ENCODE measurements at regions of chr6 and their contacts with region 1.

Region 1: DNA sequence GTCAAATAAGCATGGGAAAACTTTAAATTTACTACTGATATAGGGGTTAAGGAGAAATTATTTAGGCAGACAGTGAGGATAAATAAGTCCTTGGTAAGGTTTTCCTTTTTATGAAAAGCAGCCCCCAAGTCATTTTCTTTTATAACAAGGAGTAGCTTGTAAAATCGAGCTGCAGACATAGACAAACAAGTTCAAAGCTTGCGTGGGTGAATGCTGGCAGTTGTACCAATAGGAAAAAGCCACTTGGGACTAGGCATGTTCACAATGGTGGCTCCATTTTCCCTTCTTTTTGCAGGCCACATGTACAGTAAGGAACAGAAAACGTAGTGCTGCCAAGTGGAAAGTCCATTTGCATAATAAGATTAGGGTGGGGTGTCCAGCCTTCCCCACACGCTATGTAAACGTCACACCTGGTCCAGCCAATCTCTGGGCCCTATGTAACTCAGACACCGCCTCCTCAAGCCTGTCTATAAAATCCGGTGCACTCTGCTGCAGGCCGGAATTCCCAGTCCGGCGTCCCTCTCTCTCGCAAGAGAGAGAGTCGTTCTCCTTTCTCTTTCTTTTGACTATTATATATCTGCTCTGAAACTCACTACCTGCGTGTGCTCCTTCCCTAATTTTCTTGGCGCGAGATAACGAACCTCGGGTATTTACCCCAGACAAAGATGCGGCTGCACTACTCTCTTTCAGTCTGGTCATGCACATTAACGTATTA is 217.1 kb upstream of the MAN1A1 start:
- DNase-seq: no peak
- ATAC-seq: no peak
- H3K4me3 ChIP-seq: no peak overlapping the region
- H3K27ac ChIP-seq: no peak overlapping the region
- H3K4me1 ChIP-seq: no peaks in the 10 kb centered on the region
- H3K27me3 ChIP-seq: no peaks in the 10 kb centered on the region
- CTCF ChIP-seq: no peak
- POLR2A ChIP-seq: no peak

Region 2: GRCh38 chr6:119647309-119647708 is 80.6 kb after region 1 on chr6:
- in situ Hi-C with region 1: no loop called
- intact Hi-C with region 1: no loop called
- DNase-seq: no peak
- ATAC-seq: no peak
- H3K4me3 ChIP-seq: no peak overlapping the region
- H3K27ac ChIP-seq: no peak overlapping the region
- H3K4me1 ChIP-seq: no peaks in the 10 kb centered on the region
- H3K27me3 ChIP-seq: no peaks in the 10 kb centered on the region
- CTCF ChIP-seq: no peak
- POLR2A ChIP-seq: no peak

Region 3: GRCh38 chr6:119727504-119728217 is 161.0 kb after region 1 on chr6:
- in situ Hi-C with region 1: no loop called
- intact Hi-C with region 1: no loop called
- DNase-seq: no peak
- ATAC-seq: no peak
- H3K4me3 ChIP-seq: no peak overlapping the region
- H3K27ac ChIP-seq: no peak overlapping the region
- H3K4me1 ChIP-seq: no peaks in the 10 kb centered on the region
- H3K27me3 ChIP-seq: no peaks in the 10 kb centered on the region
- CTCF ChIP-seq: no peak
- POLR2A ChIP-seq: no peak

Region 4: GRCh38 chr6:120632975-120633374 is 1066.3 kb after region 1 on chr6:
- in situ Hi-C with region 1: no loop called
- intact Hi-C with region 1: loop called (anchors 10 kb)
- DNase-seq: no peak
- ATAC-seq: no peak
- H3K4me3 ChIP-seq: no peak overlapping the region
- H3K27ac ChIP-seq: no peak overlapping the region
- H3K4me1 ChIP-seq: no peaks in the 10 kb centered on the region
- H3K27me3 ChIP-seq: no peaks in the 10 kb centered on the region
- CTCF ChIP-seq: no peak
- POLR2A ChIP-seq: no peak

Measured in gastrocnemius medialis (tissue), 4 donors.